Mucosa of descending colon (tissue), 3 donors: ENCODE measurements at regions of chr3 and their contacts with region 1.

Region 1: GRCh38 chr3:115147329-115148141 is 447 bp upstream of the ZBTB20 start:
- DNase-seq: peak; percentile 97 to 100 (median 97)
- ATAC-seq: peak; percentile 87
- H3K4me3 ChIP-seq: peak overlapping the region; percentile 59
- H3K4me1 ChIP-seq: peaks cover 3% of the 10 kb centered on the region
- CTCF ChIP-seq: no peak

Region 2: GRCh38 chr3:115092220-115092791 is 55.2 kb before region 1 on chr3:
- intact Hi-C with region 1: loop called in 1 of 2 experiments (anchors 10 kb)
- DNase-seq: peak in 2 of 3 donors; percentile 56 to 73
- ATAC-seq: peak; percentile 91
- H3K4me3 ChIP-seq: no peak overlapping the region
- H3K4me1 ChIP-seq: no peaks in the 10 kb centered on the region
- CTCF ChIP-seq: no peak

Region 3: DNA sequence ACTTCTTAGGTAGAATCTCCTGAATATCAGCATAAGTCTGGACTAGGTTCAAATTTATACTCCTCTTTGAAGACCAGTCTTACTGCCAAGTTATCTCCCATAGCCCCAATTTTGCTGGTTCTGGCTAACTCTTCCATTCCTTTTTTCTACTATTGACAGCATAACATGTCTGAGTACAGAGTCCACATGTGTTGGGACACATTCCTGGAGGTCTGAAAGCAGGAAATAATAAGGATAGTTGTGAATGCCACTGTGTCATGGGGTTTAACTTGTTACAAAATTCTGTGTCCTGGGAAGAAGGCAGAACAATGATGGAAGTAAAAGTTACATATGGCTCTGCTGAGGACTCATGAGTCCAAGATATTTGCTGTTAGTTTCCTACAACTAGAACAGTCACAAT is 56.9 kb after region 1 on chr3:
- intact Hi-C with region 1: no loop called
- DNase-seq: no peak
- ATAC-seq: no peak
- H3K4me3 ChIP-seq: no peak overlapping the region
- H3K4me1 ChIP-seq: no peaks in the 10 kb centered on the region
- CTCF ChIP-seq: no peak

Region 4: GRCh38 chr3:115301364-115301860 is 153.9 kb after region 1 on chr3:
- intact Hi-C with region 1: no loop called
- DNase-seq: no peak
- ATAC-seq: no peak
- H3K4me3 ChIP-seq: no peak overlapping the region
- H3K4me1 ChIP-seq: no peaks in the 10 kb centered on the region
- CTCF ChIP-seq: no peak